ENCODE measurements at regions of chr11 and their contacts with region 1.

Region 1: DNA sequence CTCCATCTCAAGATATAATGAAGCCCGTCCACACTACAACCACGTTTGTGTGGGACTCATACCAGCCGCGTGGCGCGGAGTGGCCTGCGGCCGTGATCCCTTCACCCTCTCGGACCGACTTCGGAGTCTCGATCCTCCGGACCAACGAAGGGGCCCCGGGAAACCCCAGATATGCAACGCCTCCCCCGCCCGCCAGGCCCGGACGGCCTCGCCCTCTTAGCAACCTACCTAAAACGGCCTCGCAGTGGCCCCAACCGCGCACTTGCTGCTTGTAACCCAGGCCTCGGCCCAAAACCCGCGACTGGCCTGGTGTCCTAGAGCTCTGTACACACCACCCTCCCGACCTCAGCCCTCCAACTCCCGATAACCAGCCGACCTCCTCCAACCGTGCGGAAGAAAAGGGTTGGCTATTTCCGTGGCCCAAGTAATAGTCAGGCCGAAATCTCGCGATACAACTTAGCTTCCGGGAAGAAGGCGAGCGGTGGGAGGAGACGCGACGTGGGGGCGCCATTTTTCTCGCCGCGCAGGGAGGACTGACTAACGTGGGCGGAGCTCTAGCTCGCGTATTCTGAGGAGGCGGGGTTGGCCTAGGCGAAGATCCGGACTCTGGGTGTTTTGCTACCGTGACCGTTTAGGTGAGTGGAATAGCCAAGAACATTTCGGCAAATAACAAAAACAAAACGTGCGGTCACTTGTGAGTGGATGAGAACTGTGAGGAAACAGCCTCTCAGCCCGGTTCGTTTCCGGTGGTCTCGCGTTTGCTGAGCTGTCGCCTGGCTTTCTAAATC is at the starts of genes C11orf54 and TAF1D:
- DNase-seq: peak; percentile 99
- ATAC-seq: peak; percentile 91
- H3K4me3 Mint-ChIP-seq: peak within 1 kb of the TSS; percentile 100
- H3K27ac Mint-ChIP-seq: peak within 1 kb of the TSS; percentile 100
- H3K4me1 Mint-ChIP-seq: peaks cover 44% of the 10 kb centered on the region
- H3K27me3 Mint-ChIP-seq: no peaks in the 10 kb centered on the region
- total RNA-seq, gene C11orf54: 17.9 to 19.3 TPM
- total RNA-seq, gene TAF1D: 161 to 172 TPM

Region 2: GRCh38 chr11:93570759-93571413 is 170.4 kb before region 1 on chr11:
- CTCF ChIA-PET with region 1: no interaction called
- POLR2A ChIA-PET with region 1: no interaction called
- DNase-seq: no peak
- ATAC-seq: no peak
- H3K4me3 Mint-ChIP-seq: no peak overlapping the region
- H3K27ac Mint-ChIP-seq: no peak overlapping the region
- H3K4me1 Mint-ChIP-seq: no peaks in the 10 kb centered on the region
- H3K27me3 Mint-ChIP-seq: peaks cover 5% of the 10 kb centered on the region

Region 3: GRCh38 chr11:93662177-93662575 is 79.1 kb before region 1 on chr11:
- CTCF ChIA-PET with region 1: no interaction called
- POLR2A ChIA-PET with region 1: interaction called, 23 read pairs
- DNase-seq: no peak
- ATAC-seq: no peak
- H3K4me3 Mint-ChIP-seq: peak overlapping the region; percentile 86
- H3K27ac Mint-ChIP-seq: peak overlapping the region; percentile 87
- H3K4me1 Mint-ChIP-seq: peaks cover 37% of the 10 kb centered on the region
- H3K27me3 Mint-ChIP-seq: peaks cover 3% of the 10 kb centered on the region

Region 4: GRCh38 chr11:93718057-93718563 is 23.2 kb before region 1 on chr11:
- CTCF ChIA-PET with region 1: interaction called, 5 read pairs
- POLR2A ChIA-PET with region 1: interaction called, 24 read pairs
- DNase-seq: no peak
- ATAC-seq: peak; percentile 37
- H3K4me3 Mint-ChIP-seq: no peak overlapping the region
- H3K27ac Mint-ChIP-seq: peak overlapping the region; percentile 56
- H3K4me1 Mint-ChIP-seq: peaks cover 24% of the 10 kb centered on the region
- H3K27me3 Mint-ChIP-seq: no peaks in the 10 kb centered on the region

Region 5: GRCh38 chr11:93727985-93728791 is 13.1 kb before region 1 on chr11:
- CTCF ChIA-PET with region 1: interaction called, 10 read pairs
- POLR2A ChIA-PET with region 1: interaction called, 22 read pairs
- DNase-seq: no peak
- ATAC-seq: no peak
- H3K4me3 Mint-ChIP-seq: no peak overlapping the region
- H3K27ac Mint-ChIP-seq: peak overlapping the region; percentile 71
- H3K4me1 Mint-ChIP-seq: peaks cover 10% of the 10 kb centered on the region
- H3K27me3 Mint-ChIP-seq: no peaks in the 10 kb centered on the region

Region 6: DNA sequence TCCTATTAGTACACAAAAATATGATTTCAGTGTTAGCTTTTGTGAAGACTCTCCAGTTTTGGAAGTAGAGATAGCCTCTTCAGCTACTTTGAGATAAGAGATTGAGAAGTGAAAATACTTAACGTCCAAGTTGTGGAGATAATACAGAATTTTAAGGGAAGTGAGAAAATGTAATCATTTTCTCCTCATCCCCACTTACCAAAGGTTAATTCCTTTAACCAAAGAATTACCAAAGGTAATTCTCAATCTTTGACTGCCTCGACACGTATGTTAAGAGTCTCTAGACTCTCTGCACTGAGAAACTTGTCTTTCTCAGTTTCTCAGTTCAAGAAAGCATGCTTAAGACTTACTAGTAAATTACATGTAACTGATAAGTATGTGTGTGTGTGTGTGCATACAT is 15.5 kb after region 1 on chr11:
- CTCF ChIA-PET with region 1: no interaction called
- POLR2A ChIA-PET with region 1: interaction called, 10 read pairs
- DNase-seq: no peak
- ATAC-seq: no peak
- H3K4me3 Mint-ChIP-seq: no peak overlapping the region
- H3K27ac Mint-ChIP-seq: no peak overlapping the region
- H3K4me1 Mint-ChIP-seq: no peaks in the 10 kb centered on the region
- H3K27me3 Mint-ChIP-seq: no peaks in the 10 kb centered on the region

Region 7: GRCh38 chr11:93784152-93784934 is 43.1 kb after region 1 on chr11 and contains the start of gene MED17:
- CTCF ChIA-PET with region 1: interaction called, 45 read pairs
- POLR2A ChIA-PET with region 1: interaction called, 161 read pairs
- DNase-seq: peak; percentile 93
- ATAC-seq: peak; percentile 96
- H3K4me3 Mint-ChIP-seq: peak within 1 kb of the TSS; percentile 99
- H3K27ac Mint-ChIP-seq: peak within 1 kb of the TSS; percentile 97
- H3K4me1 Mint-ChIP-seq: peaks cover 46% of the 10 kb centered on the region
- H3K27me3 Mint-ChIP-seq: no peaks in the 10 kb centered on the region
- total RNA-seq, gene MED17: 43.6 to 45.3 TPM

Region 8: GRCh38 chr11:94128746-94129511 is 387.6 kb after region 1 on chr11 and contains the start of gene PANX1:
- CTCF ChIA-PET with region 1: no interaction called
- POLR2A ChIA-PET with region 1: interaction called, 11 read pairs
- DNase-seq: peak; percentile 81
- ATAC-seq: peak; percentile 87
- H3K4me3 Mint-ChIP-seq: no peak within 1 kb of the TSS
- H3K27ac Mint-ChIP-seq: peak within 1 kb of the TSS; percentile 94
- H3K4me1 Mint-ChIP-seq: peaks cover 27% of the 10 kb centered on the region
- H3K27me3 Mint-ChIP-seq: no peaks in the 10 kb centered on the region
- total RNA-seq, gene PANX1: 12.0 to 13.0 TPM